ENCODE measurements at regions of chr15 and their contacts with region 1.

Region 1: GRCh38 chr15:88897456-88898194 is 2.3 kb upstream of the HAPLN3 start:
- DNase-seq: peak; percentile 84
- H3K4me3 Mint-ChIP-seq: no peak overlapping the region
- H3K27ac Mint-ChIP-seq: no peak overlapping the region
- H3K4me1 Mint-ChIP-seq: peaks cover 43% of the 10 kb centered on the region
- H3K27me3 Mint-ChIP-seq: no peaks in the 10 kb centered on the region

Region 2: GRCh38 chr15:87917480-87917879 is 980.1 kb before region 1 on chr15:
- CTCF ChIA-PET with region 1: no interaction called
- intact Hi-C with region 1: no loop called
- DNase-seq: no peak
- H3K4me3 Mint-ChIP-seq: no peak overlapping the region
- H3K27ac Mint-ChIP-seq: no peak overlapping the region
- H3K4me1 Mint-ChIP-seq: no peaks in the 10 kb centered on the region
- H3K27me3 Mint-ChIP-seq: peaks cover 1% of the 10 kb centered on the region

Region 3: GRCh38 chr15:88467073-88467934 is 430.3 kb before region 1 on chr15 and contains the starts of genes MRPL46 and MRPS11:
- CTCF ChIA-PET with region 1: interaction called, 3 read pairs
- intact Hi-C with region 1: loop called (anchors 5 kb)
- DNase-seq: peak; percentile 93
- H3K4me3 Mint-ChIP-seq: peak within 1 kb of the TSS; percentile 91
- H3K27ac Mint-ChIP-seq: peak within 1 kb of the TSS; percentile 98
- H3K4me1 Mint-ChIP-seq: peaks cover 32% of the 10 kb centered on the region
- H3K27me3 Mint-ChIP-seq: no peaks in the 10 kb centered on the region
- total RNA-seq, gene MRPL46: 29.1 to 29.2 TPM
- total RNA-seq, gene MRPS11: 50.3 to 57.1 TPM

Region 4: GRCh38 chr15:88913017-88913849 is 15.6 kb after region 1 on chr15 and contains the start of gene MFGE8:
- CTCF ChIA-PET with region 1: interaction called, 7 read pairs
- intact Hi-C with region 1: loop called (anchors 2 kb)
- DNase-seq: peak; percentile 74
- H3K4me3 Mint-ChIP-seq: peak within 1 kb of the TSS; percentile 91
- H3K27ac Mint-ChIP-seq: peak within 1 kb of the TSS; percentile 79
- H3K4me1 Mint-ChIP-seq: peaks cover 17% of the 10 kb centered on the region
- H3K27me3 Mint-ChIP-seq: no peaks in the 10 kb centered on the region
- total RNA-seq, gene MFGE8: 28.2 to 31.6 TPM

Region 5: DNA sequence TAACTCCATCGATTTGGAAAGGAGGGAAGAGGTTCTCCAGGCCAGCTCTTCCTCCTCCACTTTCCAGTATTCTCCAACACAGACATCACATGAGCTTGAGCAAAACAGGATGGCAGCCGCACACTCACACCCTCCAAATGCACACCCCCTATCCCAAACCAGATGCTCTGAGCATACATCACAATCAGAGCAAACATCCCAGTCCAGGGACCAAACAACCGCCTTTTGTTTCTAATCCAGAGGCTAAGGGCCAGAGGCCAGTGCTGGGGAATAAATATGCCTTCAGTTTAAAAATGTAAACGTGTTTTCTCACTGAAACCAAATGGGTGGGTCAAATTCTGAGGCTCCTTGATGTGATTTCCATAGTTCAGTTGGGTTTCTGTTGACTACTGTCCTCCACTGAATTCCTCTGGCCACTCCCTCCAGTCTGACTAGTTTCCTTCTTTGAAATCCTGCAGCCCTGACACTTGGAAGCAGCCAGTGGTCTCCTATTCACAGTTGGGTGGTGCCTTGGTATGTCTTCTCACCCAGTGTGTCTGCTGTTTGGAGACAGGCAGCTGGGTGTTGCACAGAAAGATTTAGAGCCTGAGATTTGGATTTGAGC is 34.7 kb after region 1 on chr15:
- CTCF ChIA-PET with region 1: no interaction called
- intact Hi-C with region 1: no loop called
- DNase-seq: no peak
- H3K4me3 Mint-ChIP-seq: no peak overlapping the region
- H3K27ac Mint-ChIP-seq: no peak overlapping the region
- H3K4me1 Mint-ChIP-seq: no peaks in the 10 kb centered on the region
- H3K27me3 Mint-ChIP-seq: no peaks in the 10 kb centered on the region

Region 6: GRCh38 chr15:89177633-89178306 is 280.1 kb after region 1 on chr15:
- CTCF ChIA-PET with region 1: interaction called, 8 read pairs
- intact Hi-C with region 1: loop called (anchors 2 kb)
- DNase-seq: peak; percentile 86
- H3K4me3 Mint-ChIP-seq: no peak overlapping the region
- H3K27ac Mint-ChIP-seq: peak overlapping the region; percentile 94
- H3K4me1 Mint-ChIP-seq: peaks cover 46% of the 10 kb centered on the region
- H3K27me3 Mint-ChIP-seq: no peaks in the 10 kb centered on the region

Region 7: DNA sequence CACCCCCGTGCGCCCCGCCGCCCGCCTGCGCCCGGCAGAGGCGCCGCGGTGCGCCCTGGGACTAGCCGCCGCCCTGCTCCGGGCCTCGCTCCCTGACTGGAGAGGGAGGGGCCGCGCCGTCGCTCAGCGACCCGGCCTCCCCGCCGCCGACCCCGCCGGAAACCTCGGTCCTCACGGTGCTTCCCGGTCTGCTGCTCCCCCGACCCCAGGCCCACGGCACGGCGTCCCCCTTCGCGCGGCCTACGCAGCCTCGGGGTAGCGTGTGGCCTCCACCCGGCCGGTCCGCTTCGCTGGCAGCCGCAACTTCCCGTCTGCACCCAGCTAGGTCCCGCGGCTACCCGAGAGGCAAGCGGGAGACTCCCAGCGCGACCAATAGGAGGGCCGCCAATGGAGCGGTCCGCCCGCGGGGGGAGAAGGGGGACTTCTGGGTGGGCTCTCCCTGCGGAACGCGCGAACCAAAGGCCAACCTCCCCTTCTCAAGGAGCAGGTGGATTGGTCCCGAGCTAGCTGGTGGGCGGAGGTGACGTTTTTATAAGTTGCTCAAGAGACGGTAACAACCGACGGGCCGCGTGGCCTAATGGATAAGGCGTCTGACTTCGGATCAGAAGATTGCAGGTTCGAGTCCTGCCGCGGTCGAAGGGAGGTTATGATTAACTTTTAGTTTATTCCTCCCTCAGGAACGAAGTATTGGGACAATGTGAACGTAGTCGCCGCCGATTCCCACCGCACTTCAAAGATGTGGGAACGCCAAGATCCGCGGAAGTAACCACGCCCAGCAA is 437.1 kb after region 1 on chr15 and contains the start of gene POLG:
- CTCF ChIA-PET with region 1: no interaction called
- intact Hi-C with region 1: loop called (anchors 2 kb)
- DNase-seq: peak; percentile 99
- H3K4me3 Mint-ChIP-seq: peak within 1 kb of the TSS; percentile 90
- H3K27ac Mint-ChIP-seq: peak within 1 kb of the TSS; percentile 94
- H3K4me1 Mint-ChIP-seq: peaks cover 52% of the 10 kb centered on the region
- H3K27me3 Mint-ChIP-seq: peaks cover 3% of the 10 kb centered on the region
- total RNA-seq, gene POLG: 93.0 to 96.5 TPM

Measured in activated naive CD4-positive, alpha-beta T cell treated with anti-CD3 and anti-CD28 coated beads for 36 hours (primary cell).